GM10248 (cell line): ENCODE measurements at regions of chr2 and their contacts with region 1.

Region 1: GRCh38 chr2:75416420-75417342 is 144.1 kb downstream of the EVA1A start:
- DNase-seq: peak; percentile 21
- CTCF ChIP-seq: no peak

Region 2: GRCh38 chr2:74764429-74765272 is 652.0 kb before region 1 on chr2:
- CTCF ChIA-PET with region 1: no interaction called
- POLR2A ChIA-PET with region 1: no interaction called
- DNase-seq: no peak
- CTCF ChIP-seq: no peak

Region 3: DNA sequence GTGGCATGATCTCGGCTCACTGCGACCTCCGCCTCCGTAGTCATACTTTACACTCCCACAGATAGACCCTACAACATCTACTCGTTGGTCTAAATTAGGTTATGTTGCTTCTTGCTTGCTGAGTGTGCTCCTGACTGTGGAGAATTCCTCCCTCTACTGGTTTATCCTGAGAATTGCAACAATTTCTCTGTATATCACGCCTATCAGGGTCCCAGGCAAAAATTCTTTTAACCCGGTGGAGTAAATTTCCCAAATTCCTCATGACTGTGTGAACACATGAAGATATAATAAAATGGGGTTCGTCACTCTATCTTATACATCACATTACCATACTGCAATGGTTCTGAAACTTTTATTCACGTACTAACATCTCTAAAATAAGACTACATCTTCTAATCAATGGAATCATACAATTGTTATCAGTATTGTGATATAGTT is 12.7 kb before region 1 on chr2:
- CTCF ChIA-PET with region 1: interaction called, 10 read pairs
- POLR2A ChIA-PET with region 1: no interaction called
- DNase-seq: peak; percentile 31
- CTCF ChIP-seq: peak; percentile 68

Region 4: GRCh38 chr2:75432761-75433361 is 16.2 kb after region 1 on chr2:
- CTCF ChIA-PET with region 1: interaction called, 18 read pairs
- POLR2A ChIA-PET with region 1: no interaction called
- DNase-seq: peak; percentile 63
- CTCF ChIP-seq: no peak

Region 5: GRCh38 chr2:75627895-75628504 is 211.3 kb after region 1 on chr2:
- CTCF ChIA-PET with region 1: no interaction called
- POLR2A ChIA-PET with region 1: no interaction called
- DNase-seq: peak; percentile 68
- CTCF ChIP-seq: peak; percentile 95

Region 6: GRCh38 chr2:75928093-75928492 is 511.4 kb after region 1 on chr2:
- CTCF ChIA-PET with region 1: no interaction called
- POLR2A ChIA-PET with region 1: no interaction called
- DNase-seq: no peak
- CTCF ChIP-seq: no peak